HCT116 (cell line): ENCODE measurements at regions of chr3 and their contacts with region 1.

Region 1: GRCh38 chr3:104596551-104596950 is 770.2 kb upstream of the ALCAM start:
- DNase-seq: peak; percentile 45
- ATAC-seq: peak; percentile 95
- H3K4me3 ChIP-seq: no peak overlapping the region
- H3K27ac ChIP-seq: no peak overlapping the region
- H3K4me1 ChIP-seq: no peaks in the 10 kb centered on the region
- H3K27me3 ChIP-seq: no peaks in the 10 kb centered on the region
- CTCF ChIP-seq: peak; percentile 38 to 70 (median 49); a peak in 5 of 6 replicates
- POLR2A ChIP-seq: no peak
- RAD21 ChIP-seq: peak; percentile 62

Region 2: GRCh38 chr3:104685492-104685891 is 88.9 kb after region 1 on chr3:
- CTCF ChIA-PET with region 1: no interaction called
- POLR2A ChIA-PET with region 1: no interaction called
- RAD21 ChIA-PET with region 1: interaction called in 1 of 2 experiments, 11 read pairs
- intact Hi-C with region 1: no loop called
- DNase-seq: no peak
- ATAC-seq: no peak
- H3K4me3 ChIP-seq: no peak overlapping the region
- H3K27ac ChIP-seq: no peak overlapping the region
- H3K4me1 ChIP-seq: no peaks in the 10 kb centered on the region
- H3K27me3 ChIP-seq: no peaks in the 10 kb centered on the region
- CTCF ChIP-seq: no peak
- POLR2A ChIP-seq: no peak
- RAD21 ChIP-seq: no peak

Region 3: GRCh38 chr3:105647047-105647446 is 1050.5 kb after region 1 on chr3:
- CTCF ChIA-PET with region 1: no interaction called
- POLR2A ChIA-PET with region 1: no interaction called
- RAD21 ChIA-PET with region 1: no interaction called
- intact Hi-C with region 1: no loop called
- DNase-seq: peak; percentile 69
- ATAC-seq: peak; percentile 99
- H3K4me3 ChIP-seq: no peak overlapping the region
- H3K27ac ChIP-seq: no peak overlapping the region
- H3K4me1 ChIP-seq: peaks cover 3 to 7% of the 10 kb centered on the region in 2 experiments; a peak in 3 of 4 replicates
- H3K27me3 ChIP-seq: no peaks in the 10 kb centered on the region
- CTCF ChIP-seq: no peak
- POLR2A ChIP-seq: no peak
- RAD21 ChIP-seq: no peak